Head of caudate nucleus (tissue), 42 donors: ENCODE measurements at regions of chr21 and their contacts with region 1.

Region 1: DNA sequence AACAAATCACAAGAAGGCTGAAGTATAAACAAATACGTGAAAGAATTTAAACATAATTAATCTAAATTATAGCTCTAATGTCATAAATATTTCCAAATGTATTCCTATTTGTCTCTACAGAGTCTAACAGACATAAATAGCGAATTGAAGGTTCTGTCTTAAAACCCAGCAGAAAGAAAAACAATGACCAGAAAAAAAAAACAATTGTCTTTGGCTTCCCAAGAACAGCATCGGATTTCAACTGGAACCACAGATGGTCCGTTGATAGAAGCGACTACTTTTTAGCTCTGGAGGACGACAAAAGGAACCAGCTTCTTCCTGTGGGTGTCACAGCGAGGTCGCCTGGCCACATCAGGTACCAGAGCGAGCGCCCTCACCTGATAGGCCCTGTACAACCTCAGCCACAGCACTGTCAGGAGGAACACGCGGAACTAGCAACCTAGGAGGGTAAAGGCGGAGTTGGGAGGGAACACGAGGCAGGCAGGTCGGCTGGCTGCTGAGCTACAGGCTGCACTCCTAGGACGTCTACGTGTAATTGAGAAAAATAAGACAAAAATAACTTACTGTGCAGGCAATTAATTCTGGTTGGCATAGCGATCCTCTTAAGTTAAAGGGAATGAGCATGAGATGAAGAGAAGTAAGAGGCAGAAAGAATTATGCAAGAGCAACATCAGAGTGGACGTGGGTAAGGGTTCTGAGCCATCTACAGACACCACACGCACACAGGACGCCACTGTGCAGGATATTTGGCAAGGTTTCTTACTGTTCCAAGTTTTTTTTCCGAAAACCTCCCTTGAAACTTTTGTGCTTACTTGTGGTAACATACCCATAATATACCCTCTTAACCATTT is 16.7 kb upstream of the PRDM15 start:
- DNase-seq: peak in 19 of 42 donors; percentile 10 to 66 (median 29)

Region 2: DNA sequence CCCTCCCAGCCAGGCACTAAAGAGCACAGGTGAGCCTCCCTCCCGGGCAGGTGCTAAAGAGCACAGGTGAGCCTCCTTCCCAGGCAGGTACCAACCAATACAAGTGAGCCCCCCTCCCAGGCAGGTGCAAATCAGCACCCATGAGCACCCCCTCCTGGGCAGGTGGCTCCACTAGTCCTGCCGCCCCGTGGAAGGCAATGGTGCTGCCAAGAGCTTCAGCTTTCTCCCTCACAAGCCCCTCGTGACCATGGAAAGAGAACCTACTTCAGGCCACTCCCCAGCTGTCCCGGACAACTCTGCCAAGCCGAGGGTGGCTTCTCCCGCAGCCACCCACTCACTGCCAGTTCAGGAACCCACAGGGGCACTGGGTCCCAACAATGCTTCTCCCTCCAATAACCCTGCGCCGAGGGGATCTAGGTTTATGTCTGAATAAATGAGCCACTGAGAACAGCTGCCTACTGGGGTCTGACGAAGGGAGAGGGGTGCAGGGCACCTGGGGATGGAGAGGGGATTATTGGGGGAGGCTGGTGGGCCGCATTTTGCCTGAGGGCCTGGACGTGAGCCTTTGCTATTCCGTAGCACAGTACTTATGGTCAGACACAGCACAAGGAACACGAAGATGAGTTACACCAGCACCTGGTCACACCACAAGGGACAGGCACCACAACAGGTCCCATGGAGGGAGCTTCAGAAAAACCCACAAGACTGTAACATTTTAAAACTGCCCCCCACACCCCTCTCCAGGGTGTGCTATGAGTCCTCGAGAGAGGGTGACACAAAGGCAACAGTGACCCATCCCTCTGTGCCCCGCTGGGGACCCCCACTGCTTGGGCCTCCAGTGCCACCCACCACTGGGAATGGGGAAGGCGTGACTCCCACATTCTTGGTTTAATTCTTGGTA is 63.0 kb before region 1 on chr21:
- intact Hi-C with region 1: loop called (anchors 10 kb)
- DNase-seq: peak in 3 of 42 donors; percentile 3 to 10 (median 4)